Activated CD8-positive, alpha-beta memory T cell treated with anti-CD3 and anti-CD28 coated beads, Interleukin-2, amount 10 ng/mL, durations not matched to agents 7 days and 5 days (primary cell): ENCODE measurements at regions of chr15 and their contacts with region 1.

Region 1: DNA sequence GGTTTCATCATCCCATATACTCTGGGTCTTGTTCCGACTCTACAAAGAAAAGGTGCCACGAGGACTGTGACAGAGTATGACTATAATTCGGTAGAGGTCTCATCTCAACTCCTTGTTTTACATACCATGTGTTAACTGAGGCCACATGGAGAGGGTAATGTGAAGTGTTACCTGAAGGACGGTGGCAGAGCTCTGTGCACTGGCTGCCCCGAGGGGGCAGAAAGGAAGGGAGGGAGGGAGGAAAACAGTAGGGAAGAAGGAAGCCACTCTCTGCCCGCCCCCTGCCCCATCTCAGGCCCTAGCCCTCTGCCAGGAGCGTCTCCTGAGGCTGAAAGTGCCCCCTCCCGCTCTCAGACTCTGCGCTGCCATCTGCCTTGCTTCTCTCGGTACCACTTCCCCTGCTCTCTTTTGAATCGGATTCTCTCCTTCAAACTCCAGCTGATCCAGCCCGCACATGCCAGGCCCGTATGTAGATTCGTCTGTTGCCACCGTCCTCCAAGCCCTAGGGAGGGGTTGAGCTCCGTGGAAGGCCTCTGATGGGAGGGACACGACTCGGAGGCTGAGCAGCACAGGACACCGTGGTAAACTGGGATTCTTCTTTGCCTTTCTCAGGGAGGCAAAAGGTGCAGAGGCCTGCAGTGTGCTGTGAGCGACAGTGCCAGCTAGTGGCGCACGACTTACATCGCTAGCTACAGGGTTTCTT is 70.5 kb upstream of the ATP10A start:
- DNase-seq: peak; percentile 84
- ATAC-seq: peak; percentile 99
- H3K4me3 Mint-ChIP-seq: peak overlapping the region; percentile 77
- H3K27ac Mint-ChIP-seq: peak overlapping the region; percentile 58
- H3K4me1 Mint-ChIP-seq: peaks cover 9% of the 10 kb centered on the region
- H3K27me3 Mint-ChIP-seq: peaks cover 18% of the 10 kb centered on the region

Region 2: GRCh38 chr15:25508369-25509002 is 425.1 kb before region 1 on chr15:
- CTCF ChIA-PET with region 1: interaction called, 14 read pairs
- DNase-seq: no peak
- ATAC-seq: no peak
- H3K4me3 Mint-ChIP-seq: no peak overlapping the region
- H3K27ac Mint-ChIP-seq: no peak overlapping the region
- H3K4me1 Mint-ChIP-seq: no peaks in the 10 kb centered on the region
- H3K27me3 Mint-ChIP-seq: no peaks in the 10 kb centered on the region

Region 3: GRCh38 chr15:25693321-25694237 is 240.0 kb before region 1 on chr15:
- CTCF ChIA-PET with region 1: interaction called, 10 read pairs
- DNase-seq: peak; percentile 53
- ATAC-seq: no peak
- H3K4me3 Mint-ChIP-seq: no peak overlapping the region
- H3K27ac Mint-ChIP-seq: no peak overlapping the region
- H3K4me1 Mint-ChIP-seq: no peaks in the 10 kb centered on the region
- H3K27me3 Mint-ChIP-seq: no peaks in the 10 kb centered on the region

Region 4: GRCh38 chr15:25783607-25784540 is 149.7 kb before region 1 on chr15:
- CTCF ChIA-PET with region 1: interaction called, 19 read pairs
- DNase-seq: peak; percentile 55
- ATAC-seq: peak; percentile 35
- H3K4me3 Mint-ChIP-seq: no peak overlapping the region
- H3K27ac Mint-ChIP-seq: no peak overlapping the region
- H3K4me1 Mint-ChIP-seq: peaks cover 26% of the 10 kb centered on the region
- H3K27me3 Mint-ChIP-seq: no peaks in the 10 kb centered on the region

Region 5: DNA sequence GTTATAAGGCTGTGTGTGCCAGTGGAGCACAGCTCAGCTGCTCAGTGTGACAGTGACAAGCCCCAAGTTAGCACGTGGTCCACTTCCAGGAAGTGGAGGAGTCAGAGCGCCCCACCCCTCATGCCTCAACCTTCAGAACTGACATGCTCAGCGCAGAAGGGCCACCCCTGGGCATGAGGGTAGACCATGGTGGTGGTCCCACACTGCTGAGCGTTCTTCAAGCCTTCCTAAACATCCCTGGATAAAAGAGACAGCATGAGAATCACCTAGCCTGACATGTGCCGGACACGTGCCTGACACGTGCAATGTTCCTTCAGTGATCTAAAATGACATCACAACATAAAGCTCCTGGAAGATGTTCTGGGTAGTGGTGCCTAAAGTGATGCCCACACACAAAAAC is 87.2 kb before region 1 on chr15:
- CTCF ChIA-PET with region 1: interaction called, 10 read pairs
- DNase-seq: peak; percentile 81
- ATAC-seq: peak; percentile 53
- H3K4me3 Mint-ChIP-seq: no peak overlapping the region
- H3K27ac Mint-ChIP-seq: peak overlapping the region; percentile 75
- H3K4me1 Mint-ChIP-seq: peaks cover 59% of the 10 kb centered on the region
- H3K27me3 Mint-ChIP-seq: no peaks in the 10 kb centered on the region